WTC11 (cell line): ENCODE measurements at regions of chr20 and their contacts with region 1.

Region 1: DNA sequence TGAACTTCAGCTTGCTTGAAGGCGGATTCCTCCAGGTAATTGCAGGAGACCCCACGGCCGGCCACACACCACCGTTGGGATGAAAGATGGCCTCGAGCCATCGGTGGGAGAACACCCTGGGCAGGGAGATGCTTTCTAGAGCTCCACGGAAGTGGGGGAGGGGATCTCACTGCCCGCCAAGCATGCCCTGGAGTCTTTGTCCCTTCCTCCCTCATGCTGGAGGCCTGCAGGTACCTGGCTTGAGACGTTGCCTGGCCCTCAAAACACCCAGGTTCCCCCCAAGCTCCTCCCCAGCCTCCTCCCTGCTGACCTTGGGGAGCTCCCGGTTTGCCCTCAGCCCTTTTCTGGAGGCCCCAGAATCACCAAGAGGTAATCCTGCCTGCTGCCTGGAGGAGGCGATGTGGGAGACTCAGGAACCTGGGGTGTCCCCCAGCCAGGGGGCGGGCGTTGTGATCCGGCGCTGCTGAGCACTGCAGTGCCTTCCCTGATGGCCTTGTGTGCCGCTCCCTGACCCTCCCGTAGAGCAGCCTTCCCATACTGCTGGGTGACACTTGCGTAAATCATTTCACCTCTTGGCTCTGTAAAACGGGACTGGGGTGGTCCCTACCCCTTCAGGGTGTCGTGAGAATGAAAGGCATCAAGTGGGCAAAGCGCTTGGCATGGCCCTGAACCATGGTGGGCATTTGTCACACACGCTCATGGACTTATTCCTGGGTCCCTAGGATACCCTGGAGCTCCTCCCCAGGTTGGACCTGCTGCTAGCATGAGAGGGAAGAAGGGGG is 91.4 kb downstream of the CEBPB start:
- DNase-seq: peak; percentile 69
- ATAC-seq: peak; percentile 70
- H3K4me3 Mint-ChIP-seq: no peak overlapping the region
- H3K27ac Mint-ChIP-seq: no peak overlapping the region
- H3K4me1 Mint-ChIP-seq: peaks cover 9% of the 10 kb centered on the region
- H3K27me3 Mint-ChIP-seq: no peaks in the 10 kb centered on the region
- CTCF ChIP-seq: no peak; the same call in 1 of the 2 replicates

Region 2: DNA sequence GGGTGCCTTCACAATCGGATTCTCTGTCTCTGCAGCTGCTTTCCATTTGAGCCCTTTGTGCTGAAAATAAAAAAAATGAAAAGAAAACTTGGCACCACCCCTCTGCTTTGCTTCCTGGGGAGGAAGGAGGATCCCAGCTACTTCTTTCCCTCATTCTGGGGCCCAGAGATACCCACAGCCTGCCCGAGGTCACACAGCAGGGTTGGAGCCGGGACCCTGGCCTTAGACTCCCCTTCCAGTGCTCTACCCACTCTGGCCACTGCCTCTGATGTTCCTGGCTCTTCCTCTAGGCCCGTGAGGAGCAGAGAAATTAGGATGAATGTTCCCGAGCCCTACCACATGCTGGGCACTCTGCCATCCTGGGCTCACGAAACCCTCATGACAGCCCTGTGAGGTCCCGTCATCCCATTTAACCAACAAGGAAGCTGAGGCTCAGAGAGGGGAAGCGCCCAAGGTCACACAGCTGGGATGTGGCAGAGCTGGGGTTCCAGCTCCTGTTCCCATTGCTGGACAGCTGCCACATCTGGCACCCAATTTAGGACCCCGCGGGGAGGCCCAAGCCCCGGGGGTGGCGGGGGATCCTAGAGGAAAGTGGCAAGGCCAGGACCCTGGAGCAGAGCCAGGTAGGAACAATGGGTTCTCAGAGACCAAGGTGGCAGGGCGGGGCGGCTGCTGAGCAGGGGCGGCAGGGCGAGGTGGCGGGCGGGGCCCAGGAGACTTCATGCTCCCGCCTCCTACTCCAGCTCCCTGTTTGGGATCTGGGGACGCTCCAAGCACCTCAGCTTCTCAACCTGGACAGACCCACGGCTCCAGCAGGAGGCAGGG is 14.8 kb before region 1 on chr20:
- CTCF ChIA-PET with region 1: interaction called, 16 read pairs
- POLR2A ChIA-PET with region 1: no interaction called
- DNase-seq: peak; percentile 58
- ATAC-seq: peak; percentile 90
- H3K4me3 Mint-ChIP-seq: no peak overlapping the region
- H3K27ac Mint-ChIP-seq: no peak overlapping the region
- H3K4me1 Mint-ChIP-seq: peaks cover 12% of the 10 kb centered on the region
- H3K27me3 Mint-ChIP-seq: no peaks in the 10 kb centered on the region
- CTCF ChIP-seq: no peak

Region 3: GRCh38 chr20:50338479-50339391 is 56.7 kb after region 1 on chr20:
- CTCF ChIA-PET with region 1: interaction called, 10 read pairs
- POLR2A ChIA-PET with region 1: no interaction called
- DNase-seq: peak; percentile 41
- ATAC-seq: peak; percentile 73
- H3K4me3 Mint-ChIP-seq: no peak overlapping the region
- H3K27ac Mint-ChIP-seq: no peak overlapping the region; the same call in 1 of the 2 replicates
- H3K4me1 Mint-ChIP-seq: peaks cover 9% of the 10 kb centered on the region
- H3K27me3 Mint-ChIP-seq: no peaks in the 10 kb centered on the region
- CTCF ChIP-seq: no peak